ENCODE measurements at regions of chr1 and their contacts with region 1.

Region 1: DNA sequence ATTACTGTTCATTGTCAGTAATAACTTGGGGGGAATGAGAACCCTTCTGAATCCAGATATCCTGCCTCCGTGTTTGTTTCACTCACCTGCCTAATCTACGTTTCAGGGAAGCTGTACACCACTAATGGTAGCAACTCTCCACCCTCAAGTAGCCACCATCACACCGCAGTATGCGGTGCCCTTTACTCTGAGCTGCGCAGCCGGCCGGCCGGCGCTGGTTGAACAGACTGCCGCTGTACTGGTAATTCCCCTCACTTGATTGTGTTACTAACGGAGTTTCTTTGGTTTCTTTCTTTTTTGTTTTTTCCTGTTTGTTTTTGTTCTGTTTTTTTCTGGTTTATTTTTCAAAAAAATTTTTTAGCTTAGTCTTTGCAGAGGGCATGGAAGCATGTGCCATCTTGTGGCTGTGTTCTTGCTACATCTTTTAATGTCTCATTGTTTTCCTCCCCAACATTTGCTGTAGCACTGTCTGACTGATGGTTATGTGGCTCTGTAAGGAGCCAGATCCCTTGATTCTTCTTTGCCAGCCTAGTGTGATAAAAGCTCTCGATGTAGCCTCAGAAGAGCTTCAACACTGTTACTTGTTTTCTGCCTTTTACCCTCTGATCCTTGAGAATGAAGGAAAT is 15.9 kb upstream of the OLFML3 start:
- DNase-seq: peak; percentile 14
- ATAC-seq: peak; percentile 51
- H3K4me3 ChIP-seq: no peak overlapping the region
- H3K27ac ChIP-seq: no peak overlapping the region
- H3K4me1 ChIP-seq: no peaks in the 10 kb centered on the region
- H3K27me3 ChIP-seq: no peaks in the 10 kb centered on the region
- CTCF ChIP-seq: 0 out of 2 replicates have a peak, but pooled peaks have one; percentile 25
- POLR2A ChIP-seq: no peak
- RAD21 ChIP-seq: peak; percentile 34; the same call in 1 of the 2 replicates

Region 2: DNA sequence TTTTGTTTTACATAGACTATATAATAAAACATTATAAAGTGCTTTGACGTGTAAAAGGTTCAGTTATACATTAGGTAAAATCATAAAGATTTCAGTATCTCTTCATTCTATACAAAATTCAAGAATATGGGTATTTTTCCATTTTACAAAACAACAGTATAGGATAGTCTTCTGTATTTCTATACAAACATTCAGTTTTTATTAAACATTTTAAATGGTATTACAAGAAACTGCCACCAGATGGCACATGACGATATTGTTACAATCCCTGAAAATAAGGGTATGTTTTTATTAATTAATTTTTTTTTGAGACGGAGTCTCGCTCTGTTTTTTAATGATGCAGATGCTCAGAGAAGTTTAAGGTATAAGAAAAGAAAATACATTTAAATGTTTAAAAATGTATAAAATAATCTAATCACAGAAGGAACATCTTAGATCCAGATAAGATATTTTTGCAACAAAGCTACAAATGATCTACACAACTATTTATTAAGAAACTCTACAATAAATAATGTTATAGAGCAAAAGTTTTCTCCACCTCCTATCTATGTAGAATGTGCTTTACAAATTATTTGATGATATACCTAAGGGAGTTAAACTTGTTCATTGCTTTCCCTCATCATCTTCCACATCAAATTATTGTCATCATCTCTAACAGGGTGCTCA is 127.6 kb before region 1 on chr1:
- CTCF ChIA-PET with region 1: interaction called, 6 read pairs
- POLR2A ChIA-PET with region 1: no interaction called
- dilution Hi-C with region 1: no loop called
- in situ Hi-C with region 1: loop called (anchors 10 kb)
- intact Hi-C with region 1: loop called (anchors 5 kb)
- DNase-seq: peak; percentile 61
- ATAC-seq: peak; percentile 56
- H3K4me3 ChIP-seq: no peak overlapping the region
- H3K27ac ChIP-seq: no peak overlapping the region
- H3K4me1 ChIP-seq: no peaks in the 10 kb centered on the region
- H3K27me3 ChIP-seq: no peaks in the 10 kb centered on the region
- CTCF ChIP-seq: peak; percentile 65
- POLR2A ChIP-seq: no peak
- RAD21 ChIP-seq: peak; percentile 67

Region 3: DNA sequence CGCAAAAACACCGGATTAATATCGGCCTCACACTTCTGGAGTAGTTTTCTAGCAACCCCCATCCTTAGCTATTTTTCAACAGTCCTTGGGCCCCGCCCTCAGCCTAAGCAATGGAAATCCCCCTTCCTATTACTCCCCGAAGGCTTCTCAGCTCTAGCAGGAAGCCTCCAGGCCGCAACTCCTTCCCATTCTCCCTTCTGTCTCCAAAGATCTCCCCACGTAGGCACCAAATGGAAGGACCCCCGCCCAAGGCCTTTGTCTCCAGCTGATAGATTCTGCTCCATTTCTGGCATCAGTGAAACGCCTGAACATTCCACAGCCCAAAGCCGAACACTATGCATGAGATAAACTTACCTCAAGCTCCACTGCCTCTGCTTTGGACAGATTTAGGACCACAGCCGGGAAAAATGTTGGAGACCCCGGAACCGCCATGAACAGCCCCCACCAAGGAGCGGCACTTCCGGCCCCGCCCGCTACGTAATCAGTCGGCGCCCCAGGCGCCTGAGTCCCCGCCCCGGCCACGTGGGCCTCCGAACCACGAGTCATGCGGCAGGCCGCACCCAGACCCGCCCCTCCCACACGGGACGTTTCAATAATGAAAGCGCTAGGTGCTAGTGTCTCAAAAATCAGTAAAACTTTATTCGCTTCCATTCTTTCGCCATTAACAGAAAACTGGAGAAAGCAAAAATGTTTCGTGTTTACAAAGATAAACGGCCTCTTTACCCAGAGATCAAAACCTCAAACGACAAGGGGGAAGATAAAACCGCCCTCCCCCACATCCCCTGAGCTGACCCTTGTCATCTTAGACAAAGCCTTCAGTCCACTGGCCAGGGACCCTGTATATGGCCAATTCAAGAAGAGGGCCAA is 753.1 kb after region 1 on chr1 and contains the start of gene NRAS:
- CTCF ChIA-PET with region 1: no interaction called
- POLR2A ChIA-PET with region 1: no interaction called
- dilution Hi-C with region 1: no loop called
- in situ Hi-C with region 1: loop called (anchors 25 kb)
- intact Hi-C with region 1: no loop called
- DNase-seq: peak; percentile 91
- ATAC-seq: peak; percentile 91
- H3K4me3 ChIP-seq: peak within 1 kb of the TSS; percentile 86
- H3K27ac ChIP-seq: peak within 1 kb of the TSS; percentile 96
- H3K4me1 ChIP-seq: no peaks in the 10 kb centered on the region
- H3K27me3 ChIP-seq: no peaks in the 10 kb centered on the region
- CTCF ChIP-seq: no peak
- POLR2A ChIP-seq: peak; percentile 74
- RAD21 ChIP-seq: no peak
- total RNA-seq, gene NRAS: 85.9 and 110 TPM in 2 replicates

Region 4: DNA sequence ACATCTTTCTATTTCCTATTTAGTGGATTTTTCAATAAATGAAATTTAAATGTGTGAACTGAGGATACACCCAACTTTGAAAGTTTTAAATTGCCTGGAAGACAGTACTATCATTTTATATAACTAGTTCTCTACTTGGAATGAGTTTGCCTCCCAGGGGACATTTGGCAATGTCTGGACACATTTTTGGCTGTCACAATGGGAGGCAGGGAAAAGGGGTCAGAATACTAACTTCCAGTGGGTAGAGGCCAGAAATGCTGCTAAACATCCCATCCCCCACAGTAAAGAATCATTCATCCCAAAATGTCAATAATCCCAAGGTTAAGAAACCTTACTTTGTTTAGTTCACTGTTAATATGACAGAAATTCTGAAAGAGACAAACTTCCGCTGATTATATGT is 766.4 kb after region 1 on chr1:
- CTCF ChIA-PET with region 1: no interaction called
- POLR2A ChIA-PET with region 1: no interaction called
- dilution Hi-C with region 1: no loop called
- in situ Hi-C with region 1: loop called (anchors 25 kb)
- intact Hi-C with region 1: loop called (anchors 10 kb)
- DNase-seq: no peak
- ATAC-seq: no peak
- H3K4me3 ChIP-seq: no peak overlapping the region
- H3K27ac ChIP-seq: no peak overlapping the region
- H3K4me1 ChIP-seq: peaks cover 10% of the 10 kb centered on the region
- H3K27me3 ChIP-seq: no peaks in the 10 kb centered on the region
- CTCF ChIP-seq: no peak
- POLR2A ChIP-seq: no peak
- RAD21 ChIP-seq: no peak